Natural killer cell (primary cell): ENCODE measurements at regions of chr7 and their contacts with region 1.

Region 1: GRCh38 chr7:151080522-151081169 is at the start of gene FASTK:
- DNase-seq: peak; percentile 82 to 94
- ATAC-seq: peak; percentile 73 to 91 (median 79)
- H3K4me3 ChIP-seq: peak within 1 kb of the TSS; percentile 78
- H3K4me3 Mint-ChIP-seq: peak within 1 kb of the TSS; percentile 89
- H3K27ac ChIP-seq: peak within 1 kb of the TSS; percentile 78
- H3K27ac Mint-ChIP-seq: peak within 1 kb of the TSS; percentile 50 to 98
- H3K4me1 ChIP-seq: peaks cover 44% of the 10 kb centered on the region
- H3K4me1 Mint-ChIP-seq: peaks cover 30 to 51% of the 10 kb centered on the region in 2 donors
- H3K27me3 ChIP-seq: no peaks in the 10 kb centered on the region
- H3K27me3 Mint-ChIP-seq: no peaks in the 10 kb centered on the region
- CTCF ChIP-seq: no peak
- total RNA-seq, gene FASTK: 72.8 to 89.4 (median 85.2) TPM

Region 2: GRCh38 chr7:151028131-151028947 is 52.3 kb before region 1 on chr7 and contains the start of gene ABCB8:
- intact Hi-C with region 1: loop called (anchors 1 kb)
- DNase-seq: peak; percentile 95 to 99
- ATAC-seq: peak; percentile 91 to 96 (median 92)
- H3K4me3 ChIP-seq: peak within 1 kb of the TSS; percentile 84
- H3K4me3 Mint-ChIP-seq: peak within 1 kb of the TSS; percentile 95
- H3K27ac ChIP-seq: peak within 1 kb of the TSS; percentile 96
- H3K27ac Mint-ChIP-seq: peak within 1 kb of the TSS; percentile 96 to 97
- H3K4me1 ChIP-seq: peaks cover 17% of the 10 kb centered on the region
- H3K4me1 Mint-ChIP-seq: peaks cover 15 to 16% of the 10 kb centered on the region in 2 donors
- H3K27me3 ChIP-seq: no peaks in the 10 kb centered on the region
- H3K27me3 Mint-ChIP-seq: no peaks in the 10 kb centered on the region
- CTCF ChIP-seq: peak; percentile 56
- total RNA-seq, gene ABCB8: 50.6 to 60.5 (median 53.7) TPM

Region 3: GRCh38 chr7:151244196-151244840 is 163.7 kb after region 1 on chr7:
- intact Hi-C with region 1: no loop called
- DNase-seq: peak; percentile 60 to 84
- ATAC-seq: peak; percentile 49 to 63 (median 55)
- H3K4me3 ChIP-seq: no peak overlapping the region
- H3K4me3 Mint-ChIP-seq: peak overlapping the region; percentile 79
- H3K27ac ChIP-seq: no peak overlapping the region
- H3K27ac Mint-ChIP-seq: peak overlapping the region; percentile 38 to 92
- H3K4me1 ChIP-seq: peaks cover 51% of the 10 kb centered on the region
- H3K4me1 Mint-ChIP-seq: peaks cover 25 to 44% of the 10 kb centered on the region in 2 donors
- H3K27me3 ChIP-seq: peaks cover 24% of the 10 kb centered on the region
- H3K27me3 Mint-ChIP-seq: peaks cover 0 to 23% of the 10 kb centered on the region in 2 donors
- CTCF ChIP-seq: peak; percentile 81

Region 4: GRCh38 chr7:151341357-151342101 is 260.9 kb after region 1 on chr7 and contains the start of gene NUB1:
- intact Hi-C with region 1: loop called (anchors 5 kb)
- DNase-seq: peak; percentile 93 to 97
- ATAC-seq: peak; percentile 91 to 98 (median 93)
- H3K4me3 ChIP-seq: peak within 1 kb of the TSS; percentile 95
- H3K4me3 Mint-ChIP-seq: peak within 1 kb of the TSS; percentile 95
- H3K27ac ChIP-seq: peak within 1 kb of the TSS; percentile 91
- H3K27ac Mint-ChIP-seq: peak within 1 kb of the TSS; percentile 91 to 96
- H3K4me1 ChIP-seq: peaks cover 27% of the 10 kb centered on the region
- H3K4me1 Mint-ChIP-seq: peaks cover 14 to 25% of the 10 kb centered on the region in 2 donors
- H3K27me3 ChIP-seq: no peaks in the 10 kb centered on the region
- H3K27me3 Mint-ChIP-seq: no peaks in the 10 kb centered on the region
- CTCF ChIP-seq: no peak
- total RNA-seq, gene NUB1: 110 to 113 (median 111) TPM